A549 (cell line): ENCODE measurements at regions of chr15 and their contacts with region 1.

Region 1: GRCh38 chr15:85296615-85297402 is 83.6 kb upstream of the AKAP13 start:
- DNase-seq: peak; percentile 86 to 90
- ATAC-seq: peak; percentile 98
- H3K4me3 ChIP-seq: no peak overlapping the region
- H3K27ac ChIP-seq: peak overlapping the region; percentile 53 to 60; a peak in 5 of 6 replicates
- H3K4me1 ChIP-seq: peaks cover 5% of the 10 kb centered on the region; the same call in 2 of the 3 replicates
- CTCF ChIP-seq: peak; percentile 98
- EP300 ChIP-seq: no peak
- POLR2A ChIP-seq: no peak
- RAD21 ChIP-seq: peak; percentile 97 to 99

Region 2: GRCh38 chr15:85178308-85178707 is 118.5 kb before region 1 on chr15:
- CTCF ChIA-PET with region 1: no interaction called
- POLR2A ChIA-PET with region 1: no interaction called
- DNase-seq: no peak
- ATAC-seq: no peak
- H3K4me3 ChIP-seq: no peak overlapping the region
- H3K27ac ChIP-seq: no peak overlapping the region
- H3K4me1 ChIP-seq: peaks cover 22% of the 10 kb centered on the region
- CTCF ChIP-seq: no peak
- EP300 ChIP-seq: no peak
- POLR2A ChIP-seq: no peak
- RAD21 ChIP-seq: no peak

Region 3: DNA sequence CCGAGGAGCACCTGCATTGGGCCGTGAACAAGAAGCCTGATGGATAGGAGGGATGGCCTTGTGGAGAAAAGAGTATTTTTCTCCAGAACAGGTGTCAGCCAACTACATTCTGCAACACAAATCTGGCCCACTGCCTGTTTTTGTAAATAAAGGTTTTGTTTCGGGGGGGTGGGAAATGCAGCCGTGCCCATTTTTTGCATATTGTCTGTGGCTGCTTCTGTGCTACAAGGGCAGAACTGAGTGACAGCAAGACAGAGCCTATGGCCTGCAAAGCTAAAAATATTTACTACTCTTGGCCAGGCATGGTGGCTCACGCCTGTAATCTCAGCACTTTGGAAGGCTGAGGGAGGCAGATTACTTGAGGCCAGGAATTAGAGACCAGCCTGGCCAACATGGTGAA is 12.3 kb before region 1 on chr15:
- CTCF ChIA-PET with region 1: interaction called, 32 read pairs
- POLR2A ChIA-PET with region 1: no interaction called
- DNase-seq: no peak
- ATAC-seq: no peak
- H3K4me3 ChIP-seq: no peak overlapping the region
- H3K27ac ChIP-seq: no peak overlapping the region
- H3K4me1 ChIP-seq: no peaks in the 10 kb centered on the region
- CTCF ChIP-seq: no peak
- EP300 ChIP-seq: no peak
- POLR2A ChIP-seq: no peak
- RAD21 ChIP-seq: no peak

Region 4: DNA sequence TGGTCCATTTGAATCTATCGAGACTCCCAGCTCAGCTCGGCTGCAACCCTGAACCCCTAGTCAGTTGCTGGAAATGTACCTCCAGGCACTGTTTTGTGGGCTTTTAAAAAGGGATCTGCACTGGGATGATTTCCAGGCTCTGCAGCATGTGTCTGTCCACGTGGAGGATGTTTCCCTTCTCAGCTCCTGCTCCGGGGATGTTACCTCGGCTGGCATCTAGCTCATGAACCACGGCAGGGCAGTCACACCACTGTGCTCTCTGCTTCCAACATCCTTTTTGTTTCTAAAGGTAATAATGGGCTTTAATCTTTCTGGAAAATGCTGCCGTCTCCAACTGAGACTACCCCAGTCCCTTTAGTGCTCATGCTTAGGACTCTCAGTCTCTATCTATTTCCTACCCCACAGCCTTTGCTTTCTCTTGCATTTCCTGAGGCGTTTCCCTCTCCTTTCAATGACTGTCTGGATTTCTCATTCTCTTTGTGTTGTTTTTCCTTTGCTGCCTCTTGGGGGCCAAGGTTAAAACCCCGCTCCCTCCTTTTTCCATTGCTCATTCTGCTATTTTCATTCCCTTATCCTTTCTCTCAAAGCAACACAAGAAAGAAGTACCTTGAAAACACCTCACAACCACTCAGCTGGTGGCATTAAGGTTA is 40.7 kb after region 1 on chr15:
- CTCF ChIA-PET with region 1: interaction called, 104 read pairs
- POLR2A ChIA-PET with region 1: no interaction called
- DNase-seq: no peak
- ATAC-seq: peak in 1 of 2 experiments; percentile 39; a peak in 3 of 6 replicates
- H3K4me3 ChIP-seq: no peak overlapping the region
- H3K27ac ChIP-seq: peak overlapping the region; percentile 42 to 49; a peak in 5 of 6 replicates
- H3K4me1 ChIP-seq: peaks cover 17% of the 10 kb centered on the region
- CTCF ChIP-seq: no peak
- EP300 ChIP-seq: no peak
- POLR2A ChIP-seq: no peak
- RAD21 ChIP-seq: no peak

Region 5: GRCh38 chr15:85412956-85413854 is 116.4 kb after region 1 on chr15:
- CTCF ChIA-PET with region 1: interaction called, 147 read pairs
- POLR2A ChIA-PET with region 1: no interaction called
- DNase-seq: peak; percentile 93 to 98
- ATAC-seq: peak; percentile 96 to 99
- H3K4me3 ChIP-seq: peak overlapping the region; percentile 16
- H3K27ac ChIP-seq: peak overlapping the region; percentile 80 to 81
- H3K4me1 ChIP-seq: peaks cover 64% of the 10 kb centered on the region
- CTCF ChIP-seq: no peak
- EP300 ChIP-seq: peak; percentile 47 to 63; a peak in 2 of 5 replicates
- POLR2A ChIP-seq: no peak
- RAD21 ChIP-seq: peak in 1 of 2 experiments; percentile 45; a peak in 3 of 5 replicates

Region 6: GRCh38 chr15:85499371-85499887 is 202.6 kb after region 1 on chr15:
- CTCF ChIA-PET with region 1: interaction called, 84 read pairs
- POLR2A ChIA-PET with region 1: no interaction called
- DNase-seq: no peak
- ATAC-seq: no peak; a peak in 1 of 6 replicates
- H3K4me3 ChIP-seq: no peak overlapping the region
- H3K27ac ChIP-seq: peak overlapping the region in 1 of 2 experiments; percentile 23; a peak in 2 of 6 replicates
- H3K4me1 ChIP-seq: peaks cover 55% of the 10 kb centered on the region
- CTCF ChIP-seq: no peak
- EP300 ChIP-seq: no peak
- POLR2A ChIP-seq: no peak
- RAD21 ChIP-seq: no peak

Region 7: DNA sequence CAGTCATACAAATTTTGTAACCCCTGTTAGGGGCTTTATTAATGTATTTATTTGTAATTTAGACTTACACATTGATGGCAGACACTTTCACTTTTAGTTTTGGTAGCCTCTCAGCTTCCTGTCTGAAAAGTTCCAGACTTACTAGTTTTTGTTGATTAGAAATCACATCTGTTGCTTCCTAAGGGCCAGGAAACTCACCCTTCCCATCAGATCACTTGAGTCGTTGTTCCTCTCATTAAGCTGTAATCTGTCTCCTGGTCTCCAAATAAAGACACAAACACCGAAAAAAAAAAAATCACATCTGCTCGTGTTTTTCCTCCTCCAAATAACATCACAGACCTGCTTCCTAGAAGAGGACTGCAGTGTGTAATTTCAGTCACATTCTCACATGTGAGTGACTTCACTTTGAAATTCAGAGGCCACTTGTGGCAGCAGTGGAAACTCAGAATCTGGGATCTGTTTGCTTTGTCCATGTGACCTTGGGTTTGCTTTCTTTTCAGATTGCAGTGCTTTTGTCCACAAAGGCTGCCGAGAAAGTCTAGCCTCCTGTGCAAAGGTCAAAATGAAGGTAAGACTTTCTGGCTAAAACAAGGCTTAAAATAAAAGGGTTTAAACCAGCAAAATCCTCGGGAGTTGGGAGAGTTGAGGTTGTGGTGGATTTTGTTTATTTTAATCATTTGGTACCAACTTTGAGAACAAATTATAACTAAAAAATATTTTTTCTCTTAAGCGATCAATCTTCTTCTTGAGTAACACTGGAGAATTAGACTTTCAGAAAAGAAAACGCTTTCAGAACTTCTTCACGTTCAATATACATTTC is 410.9 kb after region 1 on chr15:
- CTCF ChIA-PET with region 1: no interaction called
- POLR2A ChIA-PET with region 1: no interaction called
- DNase-seq: peak in 1 of 2 experiments; percentile 30
- ATAC-seq: peak; percentile 31 to 52; a peak in 3 of 6 replicates
- H3K4me3 ChIP-seq: peak overlapping the region; percentile 11; the same call in 1 of the 3 replicates
- H3K27ac ChIP-seq: peak overlapping the region; percentile 34 to 66
- H3K4me1 ChIP-seq: peaks cover 25% of the 10 kb centered on the region
- CTCF ChIP-seq: no peak
- EP300 ChIP-seq: no peak
- POLR2A ChIP-seq: no peak
- RAD21 ChIP-seq: no peak